ENCODE measurements at regions of chr9 and their contacts with region 1.

Region 1: DNA sequence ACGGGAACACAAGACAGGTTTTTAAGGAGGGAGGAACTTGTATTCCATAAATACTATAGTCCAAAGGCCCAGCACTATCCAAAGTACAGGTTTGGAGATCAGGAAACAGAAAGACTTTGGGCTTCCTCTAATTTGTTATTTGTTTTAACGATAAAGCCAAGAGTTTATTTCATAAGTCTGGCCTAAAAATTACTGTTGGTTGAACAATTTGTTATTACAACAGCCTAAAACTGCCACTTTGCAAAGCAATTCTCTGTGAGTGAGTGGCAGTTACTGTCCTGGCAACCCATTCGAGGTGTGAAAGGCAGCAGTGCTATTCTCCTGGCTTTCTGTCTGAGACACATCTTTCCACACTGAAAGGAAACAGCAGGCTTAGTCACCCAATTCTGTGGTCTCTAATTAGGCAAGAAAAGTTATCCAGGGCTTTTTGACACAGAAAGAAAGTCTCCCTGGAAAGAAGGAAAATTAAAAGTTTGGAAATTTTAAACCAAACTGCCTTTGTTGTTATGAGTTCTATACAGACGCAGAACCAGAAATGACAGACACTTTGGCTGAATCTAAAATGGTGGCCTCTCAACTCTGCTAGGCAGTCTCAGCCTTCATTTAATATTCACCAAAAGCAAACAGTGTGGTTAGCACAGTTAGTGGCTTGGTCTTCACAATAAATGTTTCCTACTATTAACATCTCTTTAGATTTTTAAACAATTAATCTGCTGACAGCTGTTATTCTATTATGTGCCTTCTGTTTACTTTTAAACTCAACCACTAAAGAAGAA is 33.9 kb downstream of the PSMB7 start:
- DNase-seq: peak; percentile 35 to 68 (median 66)
- H3K4me3 ChIP-seq: no peak overlapping the region
- H3K4me3 Mint-ChIP-seq: peak overlapping the region in 1 of 2 donors; percentile 35
- H3K27ac ChIP-seq: peak overlapping the region in 1 of 2 donors; percentile 51
- H3K27ac Mint-ChIP-seq: peak overlapping the region in 4 of 7 donors; percentile 31 to 88 (median 58)
- H3K4me1 ChIP-seq: peaks cover 36 to 45% of the 10 kb centered on the region in 2 donors
- H3K4me1 Mint-ChIP-seq: peaks cover 55% of the 10 kb centered on the region
- H3K27me3 ChIP-seq: no peaks in the 10 kb centered on the region
- H3K27me3 Mint-ChIP-seq: no peaks in the 10 kb centered on the region
- CTCF ChIP-seq: no peak

Region 2: GRCh38 chr9:124394596-124394995 is 13.2 kb after region 1 on chr9:
- intact Hi-C with region 1: loop called in 1 of 2 experiments (anchors 2 kb)
- DNase-seq: no peak
- H3K4me3 ChIP-seq: peak overlapping the region in 1 of 3 experiments; percentile 13
- H3K4me3 Mint-ChIP-seq: no peak overlapping the region
- H3K27ac ChIP-seq: peak overlapping the region in 1 of 2 donors; percentile 76
- H3K27ac Mint-ChIP-seq: peak overlapping the region; percentile 63 to 93 (median 79)
- H3K4me1 ChIP-seq: peaks cover 52 to 65% of the 10 kb centered on the region in 2 donors
- H3K4me1 Mint-ChIP-seq: peaks cover 70% of the 10 kb centered on the region
- H3K27me3 ChIP-seq: no peaks in the 10 kb centered on the region
- H3K27me3 Mint-ChIP-seq: peaks cover 0 to under 1% (median 0%) of the 10 kb centered on the region in 3 donors
- CTCF ChIP-seq: no peak

Measured in CD14-positive monocyte (primary cell).